HCT116 (cell line): ENCODE measurements at regions of chr12 and their contacts with region 1.

Region 1: GRCh38 chr12:58648176-58648575 is 272.1 kb downstream of the LRIG3 start:
- DNase-seq: no peak
- ATAC-seq: no peak
- H3K4me3 ChIP-seq: no peak overlapping the region
- H3K27ac ChIP-seq: no peak overlapping the region
- H3K4me1 ChIP-seq: no peaks in the 10 kb centered on the region
- H3K27me3 ChIP-seq: no peaks in the 10 kb centered on the region
- CTCF ChIP-seq: no peak
- POLR2A ChIP-seq: no peak
- RAD21 ChIP-seq: no peak

Region 2: GRCh38 chr12:58764100-58764953 is 116.2 kb after region 1 on chr12:
- CTCF ChIA-PET with region 1: no interaction called
- POLR2A ChIA-PET with region 1: no interaction called
- RAD21 ChIA-PET with region 1: no interaction called
- intact Hi-C with region 1: loop called (anchors 5 kb)
- DNase-seq: no peak
- ATAC-seq: no peak
- H3K4me3 ChIP-seq: no peak overlapping the region
- H3K27ac ChIP-seq: no peak overlapping the region
- H3K4me1 ChIP-seq: no peaks in the 10 kb centered on the region
- H3K27me3 ChIP-seq: no peaks in the 10 kb centered on the region
- CTCF ChIP-seq: no peak
- POLR2A ChIP-seq: no peak
- RAD21 ChIP-seq: no peak

Region 3: GRCh38 chr12:59087077-59087673 is 439.0 kb after region 1 on chr12:
- CTCF ChIA-PET with region 1: no interaction called
- POLR2A ChIA-PET with region 1: no interaction called
- RAD21 ChIA-PET with region 1: no interaction called
- intact Hi-C with region 1: no loop called
- DNase-seq: peak; percentile 3
- ATAC-seq: no peak
- H3K4me3 ChIP-seq: no peak overlapping the region
- H3K27ac ChIP-seq: no peak overlapping the region
- H3K4me1 ChIP-seq: no peaks in the 10 kb centered on the region
- H3K27me3 ChIP-seq: no peaks in the 10 kb centered on the region
- CTCF ChIP-seq: peak; percentile 38 to 67 (median 46); a peak in 4 of 6 replicates
- POLR2A ChIP-seq: no peak
- RAD21 ChIP-seq: peak; percentile 76